ENCODE measurements at regions of chr9 and their contacts with region 1.

Region 1: GRCh38 chr9:27529316-27530278 is at the start of gene MOB3B:
- DNase-seq: peak; percentile 61 to 73
- ATAC-seq: peak; percentile 69 to 79
- H3K4me3 ChIP-seq: peak within 1 kb of the TSS; percentile 72 to 91 (median 86)
- H3K27ac ChIP-seq: peak within 1 kb of the TSS; percentile 86 to 90 (median 88)
- H3K4me1 ChIP-seq: peaks cover 15 to 17% of the 10 kb centered on the region in 2 donors
- H3K27me3 ChIP-seq: no peaks in the 10 kb centered on the region
- CTCF ChIP-seq: peak; percentile 88 to 99 (median 97)
- POLR2A ChIP-seq: peak; percentile 37 to 78
- total RNA-seq, gene MOB3B: 3.4 to 16.3 (median 12.7) TPM

Region 2: DNA sequence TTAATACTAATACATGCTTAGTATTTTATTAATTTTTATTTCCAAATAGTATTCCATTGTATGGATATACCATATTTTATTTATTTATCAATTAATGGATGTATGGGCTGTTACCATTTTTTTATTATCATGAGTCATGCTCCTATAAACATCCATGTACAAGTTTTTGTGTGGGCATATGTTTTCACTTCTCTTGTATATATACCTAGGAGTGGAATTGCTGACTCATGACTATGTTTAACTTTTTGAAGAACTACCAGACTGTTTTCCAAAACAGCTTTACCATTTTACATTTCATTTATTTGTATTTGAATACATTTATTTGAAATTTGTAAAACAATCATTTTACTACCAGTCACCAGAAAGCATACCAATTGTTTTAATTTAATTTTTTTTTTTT is 510.0 kb before region 1 on chr9:
- in situ Hi-C with region 1: no loop called
- intact Hi-C with region 1: no loop called
- DNase-seq: no peak
- ATAC-seq: no peak
- H3K4me3 ChIP-seq: no peak overlapping the region
- H3K27ac ChIP-seq: no peak overlapping the region
- H3K4me1 ChIP-seq: no peaks in the 10 kb centered on the region
- H3K27me3 ChIP-seq: no peaks in the 10 kb centered on the region
- CTCF ChIP-seq: no peak
- POLR2A ChIP-seq: no peak

Region 3: GRCh38 chr9:27377147-27377807 is 152.3 kb before region 1 on chr9:
- in situ Hi-C with region 1: no loop called
- intact Hi-C with region 1: loop called (anchors 5 kb)
- DNase-seq: peak; percentile 49 to 65
- ATAC-seq: peak; percentile 98 to 99
- H3K4me3 ChIP-seq: no peak overlapping the region
- H3K27ac ChIP-seq: peak overlapping the region; percentile 68 to 78 (median 74)
- H3K4me1 ChIP-seq: peaks cover 35 to 44% of the 10 kb centered on the region in 2 donors
- H3K27me3 ChIP-seq: no peaks in the 10 kb centered on the region
- CTCF ChIP-seq: no peak
- POLR2A ChIP-seq: no peak

Region 4: DNA sequence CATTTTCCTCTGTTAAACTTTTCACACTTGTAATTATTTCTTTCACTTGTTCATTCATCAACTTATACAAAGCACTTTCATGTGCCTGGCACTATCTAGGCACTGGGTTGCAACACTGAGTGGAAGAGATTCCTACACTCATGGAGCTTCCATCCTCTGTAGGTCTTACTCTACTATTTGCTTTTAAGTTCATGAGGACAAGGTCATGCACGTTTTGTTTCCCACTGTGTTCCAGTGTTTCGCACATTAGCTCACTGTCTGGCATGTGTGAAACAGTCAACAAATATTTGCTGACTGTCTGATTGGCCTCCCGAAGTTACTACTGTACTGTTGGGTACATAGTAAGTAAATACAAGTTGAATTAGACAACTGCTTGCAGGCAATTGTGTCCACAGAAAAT is 93.4 kb before region 1 on chr9:
- in situ Hi-C with region 1: no loop called
- intact Hi-C with region 1: loop called (anchors 5 kb)
- DNase-seq: no peak
- ATAC-seq: no peak
- H3K4me3 ChIP-seq: no peak overlapping the region
- H3K27ac ChIP-seq: no peak overlapping the region
- H3K4me1 ChIP-seq: peaks cover 10 to 17% of the 10 kb centered on the region in 2 donors
- H3K27me3 ChIP-seq: no peaks in the 10 kb centered on the region
- CTCF ChIP-seq: no peak
- POLR2A ChIP-seq: no peak

Region 5: DNA sequence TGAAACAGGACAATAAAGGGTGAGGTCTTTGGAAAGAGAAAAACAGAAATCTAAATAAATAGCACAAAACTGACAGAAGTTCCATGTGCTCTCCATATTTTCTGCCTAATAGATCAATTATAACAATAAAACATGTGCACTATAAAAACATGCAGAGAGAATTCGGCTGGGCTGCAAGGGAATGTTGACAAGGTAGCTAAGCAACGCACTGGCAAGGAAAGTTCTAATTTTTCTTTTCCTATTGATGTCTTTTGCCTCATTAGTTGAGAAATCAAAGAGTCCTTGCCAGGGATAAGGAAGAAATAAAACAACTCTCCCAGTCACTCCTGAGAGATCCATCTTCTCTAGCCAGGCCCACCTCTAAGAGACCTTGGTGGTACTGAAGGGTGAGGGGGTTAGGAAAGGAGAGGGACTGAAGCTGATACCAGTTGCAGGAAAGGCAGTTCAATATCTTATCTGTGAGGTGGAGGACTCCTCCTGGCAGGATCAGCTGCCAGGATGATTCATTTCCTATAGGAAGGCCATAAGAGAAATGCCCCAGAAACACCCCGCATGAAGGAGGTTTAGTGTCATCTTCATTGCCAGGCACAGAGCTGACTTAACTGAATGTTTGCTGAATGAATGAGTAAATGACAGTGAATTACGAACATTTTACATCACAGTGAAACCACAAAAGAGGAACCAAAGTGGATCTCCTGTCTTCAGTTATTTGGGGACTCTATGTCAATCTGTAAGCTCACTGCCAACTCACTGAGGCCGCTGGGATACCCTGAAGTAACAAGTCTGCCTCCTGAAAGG is 69.2 kb before region 1 on chr9:
- in situ Hi-C with region 1: loop called in 3 of 4 experiments (anchors 5 to 10 kb)
- intact Hi-C with region 1: no loop called
- DNase-seq: no peak
- ATAC-seq: peak in 1 of 2 donors; percentile 30
- H3K4me3 ChIP-seq: no peak overlapping the region
- H3K27ac ChIP-seq: no peak overlapping the region
- H3K4me1 ChIP-seq: peaks cover 10 to 21% of the 10 kb centered on the region in 2 donors
- H3K27me3 ChIP-seq: no peaks in the 10 kb centered on the region
- CTCF ChIP-seq: no peak
- POLR2A ChIP-seq: no peak

Region 6: GRCh38 chr9:27473111-27473529 is 56.5 kb before region 1 on chr9:
- in situ Hi-C with region 1: loop called in 2 of 4 experiments (anchors 10 kb)
- intact Hi-C with region 1: loop called (anchors 2 kb)
- DNase-seq: peak; percentile 50 to 72
- ATAC-seq: peak; percentile 80 to 91
- H3K4me3 ChIP-seq: no peak overlapping the region
- H3K27ac ChIP-seq: peak overlapping the region; percentile 19 to 59 (median 52)
- H3K4me1 ChIP-seq: peaks cover 25 to 30% of the 10 kb centered on the region in 2 donors
- H3K27me3 ChIP-seq: no peaks in the 10 kb centered on the region
- CTCF ChIP-seq: no peak
- POLR2A ChIP-seq: no peak

Region 7: DNA sequence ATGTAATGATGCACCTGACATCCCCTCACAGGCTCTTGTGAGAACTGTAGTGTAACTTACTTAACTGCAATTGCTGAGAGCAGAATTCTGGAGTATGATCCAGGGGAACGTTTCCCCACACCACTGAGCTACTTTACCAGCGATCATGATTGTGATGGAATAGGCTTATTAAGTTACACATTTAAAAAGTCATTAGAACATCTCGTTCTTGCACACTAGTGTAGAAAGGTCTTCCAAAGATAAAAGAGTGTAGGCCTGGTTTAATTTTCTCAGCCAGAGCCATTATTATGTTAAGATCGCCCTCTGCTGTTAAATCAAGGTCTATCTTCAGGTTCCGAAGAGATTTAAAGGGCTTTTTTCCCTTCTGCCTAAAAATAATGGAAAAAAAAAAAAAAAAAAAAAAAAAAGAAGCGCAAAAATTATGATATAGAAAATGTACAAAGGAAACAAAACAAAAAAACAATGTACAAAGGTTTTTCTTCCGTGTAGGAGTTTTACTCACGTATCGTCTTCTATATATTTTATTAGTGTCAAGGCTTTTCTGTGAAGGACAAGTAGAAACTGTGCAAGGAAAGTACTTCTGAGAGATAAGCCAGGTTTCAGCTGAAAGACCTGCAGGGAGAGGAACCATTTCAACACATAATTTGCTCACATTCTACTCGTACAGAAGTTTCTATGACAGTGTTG is 18.6 kb after region 1 on chr9:
- in situ Hi-C with region 1: no loop called
- intact Hi-C with region 1: loop called (anchors 1 kb)
- DNase-seq: peak; percentile 51 to 69
- ATAC-seq: peak; percentile 95 to 96
- H3K4me3 ChIP-seq: no peak overlapping the region
- H3K27ac ChIP-seq: peak overlapping the region; percentile 79 to 86 (median 84)
- H3K4me1 ChIP-seq: peaks cover 14 to 24% of the 10 kb centered on the region in 2 donors
- H3K27me3 ChIP-seq: no peaks in the 10 kb centered on the region
- CTCF ChIP-seq: peak; percentile 38 to 58 (median 54)
- POLR2A ChIP-seq: peak in 1 of 2 donors; percentile 59

Region 8: DNA sequence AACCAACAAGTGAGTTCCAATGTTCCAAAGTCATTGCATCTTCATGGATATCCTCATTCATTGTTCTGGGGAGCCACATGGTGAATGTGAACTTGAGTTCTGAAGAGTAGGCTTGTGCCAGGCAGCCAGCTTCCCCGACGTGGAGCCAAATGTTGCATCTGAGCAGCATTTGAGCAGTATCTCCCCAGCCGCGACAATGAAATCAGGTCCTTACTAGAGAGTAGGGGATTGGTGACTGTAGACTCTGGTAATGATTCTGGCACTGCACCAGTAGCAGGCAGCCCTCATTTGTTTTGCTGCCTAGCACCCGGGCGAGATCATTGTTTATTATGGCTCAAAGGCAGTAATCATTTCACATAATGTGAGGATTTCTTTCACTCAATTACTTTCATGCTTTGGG is 495.1 kb after region 1 on chr9:
- in situ Hi-C with region 1: no loop called
- intact Hi-C with region 1: no loop called
- DNase-seq: no peak
- ATAC-seq: no peak
- H3K4me3 ChIP-seq: no peak overlapping the region
- H3K27ac ChIP-seq: no peak overlapping the region
- H3K4me1 ChIP-seq: no peaks in the 10 kb centered on the region
- H3K27me3 ChIP-seq: no peaks in the 10 kb centered on the region
- CTCF ChIP-seq: no peak
- POLR2A ChIP-seq: no peak